CD4-positive, alpha-beta memory T cell (primary cell): ENCODE measurements at regions of chr6 and their contacts with region 1.

Region 1: DNA sequence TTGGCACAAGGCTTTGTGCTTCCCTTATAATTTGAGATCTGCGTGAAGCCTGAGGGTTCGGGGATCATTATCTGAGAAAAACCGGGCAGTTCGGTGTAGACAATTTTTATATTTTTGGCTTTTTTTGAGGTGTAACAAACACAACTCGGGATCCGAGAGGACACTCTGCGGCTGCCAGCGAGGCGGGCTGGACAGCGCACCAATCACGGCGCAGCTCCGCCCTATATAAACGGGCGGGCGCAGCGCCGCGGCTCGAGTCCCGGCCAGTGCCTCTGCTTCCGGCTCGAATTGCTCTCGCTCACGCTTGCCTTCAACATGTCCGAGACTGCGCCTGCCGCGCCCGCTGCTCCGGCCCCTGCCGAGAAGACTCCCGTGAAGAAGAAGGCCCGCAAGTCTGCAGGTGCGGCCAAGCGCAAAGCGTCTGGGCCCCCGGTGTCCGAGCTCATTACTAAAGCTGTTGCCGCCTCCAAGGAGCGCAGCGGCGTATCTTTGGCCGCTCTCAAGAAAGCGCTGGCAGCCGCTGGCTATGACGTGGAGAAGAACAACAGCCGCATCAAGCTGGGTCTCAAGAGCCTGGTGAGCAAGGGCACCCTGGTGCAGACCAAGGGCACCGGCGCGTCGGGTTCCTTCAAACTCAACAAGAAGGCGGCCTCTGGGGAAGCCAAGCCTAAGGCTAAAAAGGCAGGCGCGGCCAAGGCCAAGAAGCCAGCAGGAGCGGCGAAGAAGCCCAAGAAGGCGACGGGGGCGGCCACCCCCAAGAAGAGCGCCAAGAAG is 69.0 kb downstream of the HFE start:
- DNase-seq: peak; percentile 80 to 89 (median 88)
- H3K4me3 ChIP-seq: peak overlapping the region; percentile 53 to 64
- H3K4me3 Mint-ChIP-seq: peak overlapping the region; percentile 88 to 99 (median 96)
- H3K27ac ChIP-seq: peak overlapping the region; percentile 79
- H3K27ac Mint-ChIP-seq: peak overlapping the region; percentile 91 to 98 (median 95)
- H3K4me1 ChIP-seq: peaks cover 26% of the 10 kb centered on the region
- H3K4me1 Mint-ChIP-seq: peaks cover 16 to 58% (median 26%) of the 10 kb centered on the region in 4 donors
- H3K27me3 ChIP-seq: no peaks in the 10 kb centered on the region
- H3K27me3 Mint-ChIP-seq: no peaks in the 10 kb centered on the region

Region 2: GRCh38 chr6:26031595-26032339 is 124.5 kb before region 1 on chr6:
- CTCF ChIA-PET with region 1: interaction called, 4 read pairs
- POLR2A ChIA-PET with region 1: interaction called, 348 read pairs
- intact Hi-C with region 1: loop called (anchors 2 kb)
- DNase-seq: peak; percentile 86 to 94 (median 89)
- H3K4me3 ChIP-seq: peak overlapping the region; percentile 53 to 67
- H3K4me3 Mint-ChIP-seq: peak overlapping the region; percentile 91 to 99 (median 94)
- H3K27ac ChIP-seq: peak overlapping the region; percentile 71
- H3K27ac Mint-ChIP-seq: peak overlapping the region; percentile 89 to 98 (median 96)
- H3K4me1 ChIP-seq: peaks cover 35% of the 10 kb centered on the region
- H3K4me1 Mint-ChIP-seq: peaks cover 33 to 54% (median 44%) of the 10 kb centered on the region in 4 donors
- H3K27me3 ChIP-seq: no peaks in the 10 kb centered on the region
- H3K27me3 Mint-ChIP-seq: peaks cover 0 to 3% of the 10 kb centered on the region in 2 donors

Region 3: DNA sequence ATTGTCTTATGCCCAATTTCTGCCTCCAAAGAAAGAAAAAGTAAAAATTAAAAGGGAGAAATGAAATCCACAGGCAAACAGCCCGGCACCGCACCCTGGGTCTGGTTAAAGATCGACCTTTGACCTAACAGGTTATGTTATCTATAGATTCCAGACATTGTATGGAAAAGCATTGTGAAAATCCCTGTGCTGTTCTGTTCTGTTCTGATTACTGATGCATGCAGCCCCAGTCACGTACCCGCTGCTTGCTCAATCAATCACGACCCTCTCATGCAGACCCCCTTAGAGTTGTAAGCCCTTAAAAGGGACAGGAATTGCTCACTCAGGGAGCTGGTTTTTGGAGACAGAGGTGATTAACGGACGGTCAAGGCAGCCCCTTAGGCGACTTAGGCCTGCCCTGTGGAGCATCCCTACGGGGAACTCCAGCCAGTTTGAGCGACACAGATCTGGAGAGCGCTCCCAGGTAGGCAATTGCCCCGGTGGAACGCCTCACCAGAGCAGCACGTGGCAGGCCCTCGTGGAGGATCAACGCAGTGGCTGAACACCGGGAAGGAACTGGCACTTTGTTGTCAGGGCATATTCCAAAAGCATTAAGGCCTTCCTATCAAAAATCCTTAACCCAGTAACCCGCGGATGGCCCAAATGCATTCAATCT is 81.1 kb before region 1 on chr6:
- CTCF ChIA-PET with region 1: no interaction called
- POLR2A ChIA-PET with region 1: no interaction called
- intact Hi-C with region 1: no loop called
- DNase-seq: no peak
- H3K4me3 ChIP-seq: no peak overlapping the region
- H3K4me3 Mint-ChIP-seq: no peak overlapping the region
- H3K27ac ChIP-seq: no peak overlapping the region
- H3K27ac Mint-ChIP-seq: no peak overlapping the region
- H3K4me1 ChIP-seq: no peaks in the 10 kb centered on the region
- H3K4me1 Mint-ChIP-seq: no peaks in the 10 kb centered on the region
- H3K27me3 ChIP-seq: no peaks in the 10 kb centered on the region
- H3K27me3 Mint-ChIP-seq: peaks cover 6 to 8% of the 10 kb centered on the region in 2 donors

Region 4: GRCh38 chr6:26136321-26136720 is 19.9 kb before region 1 on chr6:
- CTCF ChIA-PET with region 1: no interaction called
- POLR2A ChIA-PET with region 1: interaction called, 2,775 read pairs
- intact Hi-C with region 1: no loop called
- DNase-seq: no peak
- H3K4me3 ChIP-seq: no peak overlapping the region
- H3K4me3 Mint-ChIP-seq: no peak overlapping the region
- H3K27ac ChIP-seq: no peak overlapping the region
- H3K27ac Mint-ChIP-seq: peak overlapping the region in 2 of 7 donors; percentile 0 to 51
- H3K4me1 ChIP-seq: peaks cover 5% of the 10 kb centered on the region
- H3K4me1 Mint-ChIP-seq: peaks cover 20 to 46% (median 28%) of the 10 kb centered on the region in 4 donors
- H3K27me3 ChIP-seq: no peaks in the 10 kb centered on the region
- H3K27me3 Mint-ChIP-seq: no peaks in the 10 kb centered on the region

Region 5: DNA sequence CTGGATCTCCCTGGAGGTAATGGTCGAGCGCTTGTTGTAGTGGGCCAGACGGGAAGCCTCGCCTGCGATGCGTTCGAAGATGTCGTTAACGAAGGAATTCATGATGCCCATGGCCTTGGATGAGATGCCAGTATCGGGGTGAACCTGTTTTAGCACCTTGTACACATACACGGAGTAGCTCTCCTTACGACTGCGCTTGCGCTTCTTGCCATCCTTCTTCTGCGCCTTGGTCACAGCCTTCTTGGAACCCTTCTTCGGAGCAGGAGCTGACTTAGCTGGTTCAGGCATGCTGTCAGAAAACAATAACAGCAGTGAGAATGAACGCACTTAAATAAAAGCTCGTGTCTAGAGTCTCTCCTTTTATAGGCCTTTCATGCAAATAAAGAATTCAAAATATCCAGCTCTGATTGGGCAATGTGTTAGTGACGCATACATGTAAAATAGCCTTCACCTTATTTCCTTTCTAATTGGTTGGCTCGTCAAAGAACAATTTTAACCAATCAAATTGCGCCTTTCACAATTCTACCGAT is 60.2 kb after region 1 on chr6:
- CTCF ChIA-PET with region 1: interaction called, 8 read pairs
- POLR2A ChIA-PET with region 1: interaction called, 323 read pairs
- intact Hi-C with region 1: loop called (anchors 1 kb)
- DNase-seq: peak; percentile 88 to 96 (median 94)
- H3K4me3 ChIP-seq: peak overlapping the region; percentile 75 to 85
- H3K4me3 Mint-ChIP-seq: no peak overlapping the region
- H3K27ac ChIP-seq: peak overlapping the region; percentile 82
- H3K27ac Mint-ChIP-seq: no peak overlapping the region
- H3K4me1 ChIP-seq: peaks cover 26% of the 10 kb centered on the region
- H3K4me1 Mint-ChIP-seq: peaks cover 0 to 5% (median 2%) of the 10 kb centered on the region in 4 donors
- H3K27me3 ChIP-seq: no peaks in the 10 kb centered on the region
- H3K27me3 Mint-ChIP-seq: no peaks in the 10 kb centered on the region

Region 6: DNA sequence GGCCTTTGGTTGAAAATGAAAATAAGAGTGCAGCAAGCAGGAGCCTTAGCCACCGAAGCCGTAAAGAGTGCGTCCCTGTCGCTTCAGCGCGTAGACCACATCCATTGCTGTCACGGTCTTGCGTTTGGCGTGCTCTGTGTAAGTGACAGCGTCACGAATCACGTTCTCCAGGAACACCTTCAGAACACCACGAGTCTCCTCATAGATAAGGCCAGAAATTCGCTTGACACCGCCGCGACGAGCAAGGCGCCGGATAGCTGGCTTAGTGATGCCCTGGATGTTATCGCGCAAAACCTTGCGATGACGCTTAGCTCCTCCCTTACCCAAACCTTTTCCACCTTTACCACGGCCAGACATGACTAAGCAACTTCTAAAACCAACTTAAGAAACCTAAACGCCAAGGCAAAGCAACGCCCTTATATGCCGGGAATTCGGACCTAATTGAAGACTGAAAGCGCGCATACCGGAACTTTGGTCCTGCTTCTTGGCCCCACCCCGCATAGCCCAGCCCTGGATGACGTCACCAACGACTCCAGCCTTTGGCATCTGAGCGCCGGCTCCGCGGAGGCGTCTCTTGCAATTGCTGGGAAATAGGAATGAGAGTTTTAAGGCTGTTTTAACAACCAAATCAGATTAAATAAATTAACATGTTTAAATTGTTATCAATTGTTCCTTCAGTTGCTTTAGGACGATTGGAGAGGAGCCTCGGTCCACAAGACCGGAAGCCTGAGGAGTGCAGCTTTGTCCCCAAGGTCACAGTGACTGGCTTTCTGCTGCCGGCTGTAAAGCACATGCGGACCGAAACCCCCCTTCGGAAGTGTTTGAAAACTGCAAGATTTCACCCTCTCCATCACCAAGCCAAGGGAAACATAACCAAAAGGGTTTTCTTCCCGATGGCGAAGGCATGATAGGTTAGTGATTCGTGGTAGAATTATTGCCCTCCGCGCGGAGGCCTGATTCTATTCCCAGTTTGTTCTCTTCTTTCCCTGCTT is 129.2 kb after region 1 on chr6:
- CTCF ChIA-PET with region 1: no interaction called
- POLR2A ChIA-PET with region 1: interaction called, 158 read pairs
- intact Hi-C with region 1: loop called (anchors 1 kb)
- DNase-seq: peak; percentile 91 to 98 (median 95)
- H3K4me3 ChIP-seq: peak overlapping the region; percentile 51 to 75
- H3K4me3 Mint-ChIP-seq: peak overlapping the region; percentile 83 to 95 (median 91)
- H3K27ac ChIP-seq: peak overlapping the region; percentile 81
- H3K27ac Mint-ChIP-seq: peak overlapping the region; percentile 95 to 99 (median 99)
- H3K4me1 ChIP-seq: peaks cover 13% of the 10 kb centered on the region
- H3K4me1 Mint-ChIP-seq: peaks cover 8 to 34% (median 19%) of the 10 kb centered on the region in 4 donors
- H3K27me3 ChIP-seq: no peaks in the 10 kb centered on the region
- H3K27me3 Mint-ChIP-seq: peaks cover 2 to 9% of the 10 kb centered on the region in 2 donors

Region 7: DNA sequence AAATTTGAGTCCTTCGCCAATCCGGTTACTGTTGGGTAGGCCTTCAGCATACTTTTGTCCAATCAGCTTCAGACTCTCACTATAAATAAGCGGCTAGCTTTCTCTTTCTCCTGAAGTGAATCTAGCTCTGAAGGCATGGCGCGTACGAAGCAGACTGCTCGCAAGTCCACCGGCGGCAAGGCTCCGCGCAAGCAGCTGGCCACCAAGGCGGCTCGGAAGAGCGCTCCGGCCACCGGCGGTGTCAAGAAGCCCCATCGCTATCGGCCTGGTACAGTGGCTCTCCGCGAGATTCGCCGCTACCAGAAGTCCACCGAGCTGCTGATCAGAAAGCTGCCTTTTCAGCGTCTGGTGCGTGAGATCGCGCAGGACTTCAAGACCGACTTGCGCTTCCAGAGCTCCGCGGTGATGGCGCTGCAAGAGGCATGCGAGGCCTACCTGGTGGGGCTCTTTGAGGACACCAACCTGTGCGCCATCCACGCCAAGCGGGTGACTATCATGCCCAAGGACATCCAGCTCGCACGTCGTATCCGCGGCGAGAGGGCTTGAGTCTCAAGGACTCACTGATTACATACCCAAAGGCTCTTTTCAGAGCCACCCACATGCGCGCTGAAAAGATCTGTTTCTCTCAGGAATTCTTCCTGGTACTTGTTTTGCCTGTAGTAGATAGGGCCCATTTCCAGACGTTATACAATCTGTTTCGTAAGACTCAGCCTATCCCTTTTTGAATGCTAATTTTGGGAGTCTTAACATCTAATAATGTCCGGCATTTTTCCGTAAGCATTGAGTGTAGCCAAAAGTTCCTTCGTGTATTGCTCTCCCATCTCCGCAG is 1653.9 kb after region 1 on chr6:
- CTCF ChIA-PET with region 1: no interaction called
- POLR2A ChIA-PET with region 1: interaction called, 79 read pairs
- intact Hi-C with region 1: no loop called
- DNase-seq: peak; percentile 85 to 94 (median 92)
- H3K4me3 ChIP-seq: peak overlapping the region; percentile 31 to 67
- H3K4me3 Mint-ChIP-seq: peak overlapping the region; percentile 92 to 99 (median 96)
- H3K27ac ChIP-seq: peak overlapping the region; percentile 79
- H3K27ac Mint-ChIP-seq: peak overlapping the region; percentile 94 to 98 (median 97)
- H3K4me1 ChIP-seq: peaks cover 49% of the 10 kb centered on the region
- H3K4me1 Mint-ChIP-seq: peaks cover 39 to 74% (median 50%) of the 10 kb centered on the region in 4 donors
- H3K27me3 ChIP-seq: no peaks in the 10 kb centered on the region
- H3K27me3 Mint-ChIP-seq: no peaks in the 10 kb centered on the region